Ascending aorta (tissue), 2 donors: ENCODE measurements at regions of chr3 and their contacts with region 1.

Region 1: DNA sequence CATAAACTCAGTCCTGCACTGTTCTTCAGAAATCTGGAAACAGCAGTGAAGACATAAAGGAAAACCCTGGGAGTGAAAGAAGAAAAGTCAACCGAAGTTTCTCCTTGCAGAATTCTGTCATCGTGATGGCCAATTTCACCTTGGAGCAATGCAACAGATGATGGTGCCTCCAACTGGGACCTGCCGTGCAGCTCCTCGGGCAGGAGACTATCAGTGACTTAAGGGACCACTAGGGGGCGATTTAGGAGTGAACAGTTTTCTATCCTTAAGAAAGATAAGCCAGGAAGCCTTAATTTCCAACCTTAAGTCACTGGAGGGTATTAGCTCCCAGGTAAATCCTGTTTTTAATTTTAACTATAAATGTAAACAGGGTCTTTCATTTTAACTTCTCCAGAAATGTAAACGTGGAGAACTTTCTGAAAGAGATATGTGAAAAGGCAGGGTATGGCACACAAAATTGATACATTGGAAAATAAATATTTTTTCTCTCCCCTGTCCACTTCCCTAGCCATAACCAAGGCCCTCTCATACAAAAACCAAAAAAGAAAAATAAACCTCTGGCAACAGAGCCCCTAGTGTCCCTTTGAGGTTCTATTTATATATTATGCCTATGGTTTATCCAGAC is 116.3 kb downstream of the PDZRN3 start:
- DNase-seq: no peak
- H3K4me3 ChIP-seq: peak overlapping the region in 1 of 2 donors; percentile 13
- H3K27ac ChIP-seq: peak overlapping the region; percentile 73 to 89
- H3K4me1 ChIP-seq: peaks cover 8 to 62% of the 10 kb centered on the region in 2 donors
- H3K27me3 ChIP-seq: no peaks in the 10 kb centered on the region
- CTCF ChIP-seq: peak; percentile 56 to 73 (median 71)

Region 2: DNA sequence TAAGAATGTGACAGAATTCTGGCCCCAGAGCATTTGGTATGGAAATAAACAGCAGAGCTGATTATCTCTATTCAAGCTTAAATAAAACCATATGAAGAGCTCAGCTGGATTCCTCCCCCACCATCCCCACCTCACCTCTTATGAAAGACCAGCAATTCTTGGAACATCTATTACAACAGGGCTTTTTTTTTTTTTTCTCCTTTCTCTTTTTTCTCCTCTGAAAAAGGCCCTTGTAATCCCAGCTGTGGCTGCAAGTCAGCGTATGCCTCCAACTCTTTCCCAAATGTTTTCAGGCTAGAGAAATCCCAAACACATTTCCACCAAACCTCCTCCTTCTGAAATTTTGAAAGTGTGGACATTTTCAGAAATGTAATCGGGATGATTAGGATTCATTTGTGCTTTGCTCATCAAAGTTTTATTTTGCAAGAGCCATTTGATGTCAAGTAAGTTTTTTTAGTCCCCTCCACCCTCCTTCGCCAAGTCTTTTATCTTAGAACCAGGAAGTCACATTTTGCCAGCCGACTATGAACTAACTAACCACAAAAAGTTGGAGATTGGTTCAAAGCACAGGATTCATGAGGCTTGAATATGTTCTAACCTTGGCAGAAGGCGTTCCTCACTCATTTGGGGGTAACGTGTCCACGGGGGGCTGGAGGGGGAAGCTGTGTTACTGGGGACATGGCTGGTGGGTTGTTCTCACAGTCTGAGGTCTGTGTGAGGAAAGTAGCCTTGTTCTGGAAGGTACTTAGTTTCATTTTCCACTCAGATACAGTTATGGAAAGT is 258.3 kb after region 1 on chr3:
- intact Hi-C with region 1: loop called (anchors 5 kb)
- DNase-seq: no peak
- H3K4me3 ChIP-seq: peak overlapping the region; percentile 44 to 59
- H3K27ac ChIP-seq: peak overlapping the region; percentile 80 to 83
- H3K4me1 ChIP-seq: peaks cover 0 to 9% of the 10 kb centered on the region in 2 donors
- H3K27me3 ChIP-seq: no peaks in the 10 kb centered on the region
- CTCF ChIP-seq: no peak

Region 3: GRCh38 chr3:73786321-73786807 is 277.9 kb after region 1 on chr3:
- intact Hi-C with region 1: loop called (anchors 5 kb)
- DNase-seq: peak; percentile 63 to 93
- H3K4me3 ChIP-seq: no peak overlapping the region
- H3K27ac ChIP-seq: peak overlapping the region; percentile 69 to 76
- H3K4me1 ChIP-seq: peaks cover 0 to 21% of the 10 kb centered on the region in 2 donors
- H3K27me3 ChIP-seq: no peaks in the 10 kb centered on the region
- CTCF ChIP-seq: no peak

Region 4: DNA sequence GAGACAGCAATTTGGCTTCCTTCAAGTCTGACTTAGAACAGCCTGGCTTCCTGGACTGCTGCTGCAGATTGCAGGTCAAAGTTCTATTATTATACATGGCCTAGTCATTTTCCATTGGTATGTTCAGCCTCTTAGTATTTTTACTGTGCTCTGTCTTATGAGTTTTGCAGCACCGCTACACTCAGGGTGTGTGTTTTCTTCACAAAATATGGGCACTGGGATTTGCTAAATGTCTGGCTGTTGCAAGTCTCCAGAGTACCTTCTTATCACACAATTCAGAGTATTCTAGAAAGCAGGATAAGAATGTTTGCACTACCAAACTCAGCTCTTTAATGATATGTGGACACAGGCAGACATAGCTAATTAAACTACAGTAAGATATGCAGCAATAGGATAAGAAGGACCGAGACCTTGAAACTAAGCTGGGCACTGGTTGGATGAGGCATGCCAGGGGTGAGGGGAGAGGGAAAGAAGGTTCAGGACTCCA is 319.3 kb after region 1 on chr3:
- intact Hi-C with region 1: loop called (anchors 5 kb)
- DNase-seq: peak in 1 of 2 donors; percentile 73
- H3K4me3 ChIP-seq: no peak overlapping the region
- H3K27ac ChIP-seq: peak overlapping the region; percentile 87 to 90
- H3K4me1 ChIP-seq: peaks cover 5 to 32% of the 10 kb centered on the region in 2 donors
- H3K27me3 ChIP-seq: no peaks in the 10 kb centered on the region
- CTCF ChIP-seq: no peak

Region 5: GRCh38 chr3:73848173-73848906 is 339.9 kb after region 1 on chr3:
- intact Hi-C with region 1: loop called (anchors 1 kb)
- DNase-seq: no peak
- H3K4me3 ChIP-seq: no peak overlapping the region
- H3K27ac ChIP-seq: no peak overlapping the region
- H3K4me1 ChIP-seq: peaks cover 0 to 2% of the 10 kb centered on the region in 2 donors
- H3K27me3 ChIP-seq: no peaks in the 10 kb centered on the region
- CTCF ChIP-seq: peak; percentile 37 to 77 (median 63)